Activated naive CD4-positive, alpha-beta T cell treated with anti-CD3 and anti-CD28 coated beads, Interleukin-2, amount 10 ng/mL, durations not matched to agents 7 days and 5 days (primary cell): ENCODE measurements at regions of chr14 and their contacts with region 1.

Region 1: DNA sequence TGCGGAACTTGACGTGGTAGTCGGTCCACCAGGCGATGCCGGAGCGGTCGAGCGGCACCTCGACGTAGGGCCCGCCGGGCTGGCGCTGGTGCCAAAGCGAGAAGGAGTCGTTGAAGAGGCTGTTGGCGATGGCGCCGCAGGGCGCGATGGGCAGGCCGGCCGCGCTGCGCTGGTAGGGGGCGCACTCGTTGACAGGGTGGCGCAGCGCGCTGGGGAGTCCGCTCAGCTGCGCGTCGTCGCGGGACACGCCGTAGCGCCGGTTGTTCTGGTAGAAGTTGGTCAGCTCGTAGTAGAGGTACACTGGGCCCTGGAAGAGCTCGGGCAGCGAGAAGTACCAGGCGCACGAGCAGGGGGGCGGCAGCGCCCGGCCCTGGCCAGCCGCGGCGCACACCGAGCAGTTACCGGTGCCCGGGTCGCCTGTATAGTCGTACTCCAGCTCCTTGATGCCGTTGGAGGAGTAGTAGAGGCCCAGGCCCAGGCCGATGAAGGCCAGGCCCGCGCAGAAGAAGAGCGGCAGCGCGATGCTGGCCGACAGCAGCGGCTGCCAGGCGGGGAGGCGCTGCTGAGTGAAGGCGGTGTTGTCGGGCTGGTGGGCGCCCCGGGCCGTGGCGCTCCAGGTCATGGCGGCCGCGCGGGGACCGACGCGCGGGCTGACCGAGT is 482 bp downstream of the TMEM30B start:
- DNase-seq: peak; percentile 78
- H3K4me3 Mint-ChIP-seq: peak overlapping the region; percentile 81
- H3K27ac Mint-ChIP-seq: peak overlapping the region; percentile 80
- H3K4me1 Mint-ChIP-seq: peaks cover 35% of the 10 kb centered on the region
- H3K27me3 Mint-ChIP-seq: peaks cover 48% of the 10 kb centered on the region

Region 2: DNA sequence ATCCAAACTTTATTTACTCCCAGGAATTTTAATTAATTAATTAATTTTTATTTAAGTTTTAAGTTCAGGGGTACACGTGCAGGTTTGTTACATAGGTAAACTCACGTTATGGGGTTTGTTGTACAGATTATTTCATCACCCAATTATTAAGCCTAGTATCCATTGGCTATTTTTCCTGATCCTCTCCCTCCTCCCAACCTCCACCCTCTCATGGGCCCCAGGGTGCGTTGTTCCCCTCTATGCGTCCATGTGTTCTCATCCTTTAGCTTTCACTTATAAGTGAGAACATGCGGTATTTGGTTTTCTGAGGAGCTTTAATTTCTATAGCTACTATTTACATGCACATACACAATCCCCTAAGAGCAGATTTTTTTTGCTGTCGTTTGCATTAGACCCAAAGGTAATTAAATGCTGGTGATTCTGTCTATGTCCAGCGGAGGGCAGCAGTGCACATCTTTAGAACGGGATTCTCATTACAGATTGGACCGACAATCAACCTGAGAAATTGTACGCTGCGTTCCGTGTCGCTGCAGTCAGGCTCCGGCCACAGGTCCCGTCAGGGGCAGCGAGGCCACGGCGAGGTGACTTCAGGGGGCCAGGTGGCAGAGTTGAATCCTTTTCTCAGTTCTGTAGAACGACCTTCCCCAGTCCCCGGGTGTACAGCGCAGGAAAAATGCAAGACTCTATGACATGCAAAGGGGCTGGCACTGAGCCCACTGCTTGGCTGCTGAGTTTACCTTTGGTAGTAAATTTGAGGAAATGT is 11.2 kb before region 1 on chr14:
- CTCF ChIA-PET with region 1: interaction called, 38 read pairs
- DNase-seq: peak; percentile 86
- H3K4me3 Mint-ChIP-seq: peak overlapping the region; percentile 34
- H3K27ac Mint-ChIP-seq: no peak overlapping the region
- H3K4me1 Mint-ChIP-seq: peaks cover 8% of the 10 kb centered on the region
- H3K27me3 Mint-ChIP-seq: peaks cover 62% of the 10 kb centered on the region

Region 3: GRCh38 chr14:61296719-61297502 is 16.3 kb after region 1 on chr14:
- CTCF ChIA-PET with region 1: interaction called, 11 read pairs
- DNase-seq: no peak
- H3K4me3 Mint-ChIP-seq: no peak overlapping the region
- H3K27ac Mint-ChIP-seq: no peak overlapping the region
- H3K4me1 Mint-ChIP-seq: peaks cover 49% of the 10 kb centered on the region
- H3K27me3 Mint-ChIP-seq: no peaks in the 10 kb centered on the region

Region 4: GRCh38 chr14:61719344-61720293 is 439.0 kb after region 1 on chr14:
- CTCF ChIA-PET with region 1: no interaction called
- DNase-seq: no peak
- H3K4me3 Mint-ChIP-seq: peak overlapping the region; percentile 46
- H3K27ac Mint-ChIP-seq: peak overlapping the region; percentile 84
- H3K4me1 Mint-ChIP-seq: peaks cover 74% of the 10 kb centered on the region
- H3K27me3 Mint-ChIP-seq: no peaks in the 10 kb centered on the region